ENCODE measurements at regions of chr6 and their contacts with region 1.

Region 1: GRCh38 chr6:151609553-151609979 is 115.7 kb downstream of the CCDC170 start:
- DNase-seq: no peak
- H3K4me3 Mint-ChIP-seq: no peak overlapping the region
- H3K27ac Mint-ChIP-seq: no peak overlapping the region
- H3K4me1 Mint-ChIP-seq: no peaks in the 10 kb centered on the region
- H3K27me3 Mint-ChIP-seq: peaks cover 40% of the 10 kb centered on the region

Region 2: GRCh38 chr6:151534576-151534975 is 75.0 kb before region 1 on chr6:
- CTCF ChIA-PET with region 1: no interaction called
- intact Hi-C with region 1: loop called (anchors 5 kb)
- DNase-seq: no peak
- H3K4me3 Mint-ChIP-seq: no peak overlapping the region
- H3K27ac Mint-ChIP-seq: no peak overlapping the region
- H3K4me1 Mint-ChIP-seq: no peaks in the 10 kb centered on the region
- H3K27me3 Mint-ChIP-seq: no peaks in the 10 kb centered on the region

Region 3: GRCh38 chr6:151576633-151577032 is 32.9 kb before region 1 on chr6:
- CTCF ChIA-PET with region 1: no interaction called
- intact Hi-C with region 1: no loop called
- DNase-seq: no peak
- H3K4me3 Mint-ChIP-seq: no peak overlapping the region
- H3K27ac Mint-ChIP-seq: no peak overlapping the region
- H3K4me1 Mint-ChIP-seq: no peaks in the 10 kb centered on the region
- H3K27me3 Mint-ChIP-seq: peaks cover 10% of the 10 kb centered on the region

Measured in activated naive CD4-positive, alpha-beta T cell treated with anti-CD3 and anti-CD28 coated beads for 36 hours (primary cell).